Activated CD4-positive, alpha-beta T cell treated with anti-CD3 and anti-CD28 coated beads for 36 hours (primary cell): ENCODE measurements at regions of chr1 and their contacts with region 1.

Region 1: GRCh38 chr1:53889304-53890298 is at the start of gene YIPF1:
- DNase-seq: peak; percentile 93
- ATAC-seq: peak; percentile 90
- H3K4me3 Mint-ChIP-seq: peak within 1 kb of the TSS; percentile 96
- H3K27ac Mint-ChIP-seq: peak within 1 kb of the TSS; percentile 94
- H3K4me1 Mint-ChIP-seq: peaks cover 38% of the 10 kb centered on the region
- H3K27me3 Mint-ChIP-seq: no peaks in the 10 kb centered on the region
- total RNA-seq, gene YIPF1: 19.0 to 24.4 TPM

Region 2: DNA sequence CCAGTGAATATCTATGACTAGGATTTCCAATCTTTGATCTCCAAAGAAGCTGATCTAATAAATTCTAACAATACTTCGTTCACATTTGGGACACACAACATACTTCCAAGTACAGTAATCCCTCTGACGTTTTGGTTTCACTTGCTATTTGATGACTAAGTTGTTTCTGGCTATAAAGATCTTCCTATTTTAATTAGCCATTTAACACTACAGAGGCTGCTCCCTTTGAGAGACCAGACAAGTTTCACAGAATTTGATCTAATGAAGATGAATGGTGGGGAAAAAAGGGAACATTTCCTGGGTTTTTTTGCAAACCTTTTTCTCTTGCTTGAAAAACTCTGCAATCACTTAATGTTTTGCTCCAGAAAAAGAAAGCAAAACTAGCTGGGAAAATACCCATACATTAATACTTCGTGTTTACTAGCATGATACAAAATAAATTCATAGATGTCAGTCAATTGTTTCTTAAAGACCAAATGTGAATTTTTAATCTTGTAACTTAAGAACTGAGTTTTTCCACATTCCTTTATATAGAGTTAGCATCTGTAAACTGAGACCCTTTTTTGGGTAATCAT is 122.7 kb before region 1 on chr1:
- CTCF ChIA-PET with region 1: no interaction called
- POLR2A ChIA-PET with region 1: no interaction called
- intact Hi-C with region 1: no loop called
- DNase-seq: no peak
- ATAC-seq: no peak
- H3K4me3 Mint-ChIP-seq: no peak overlapping the region
- H3K27ac Mint-ChIP-seq: peak overlapping the region; percentile 8
- H3K4me1 Mint-ChIP-seq: peaks cover 18% of the 10 kb centered on the region
- H3K27me3 Mint-ChIP-seq: no peaks in the 10 kb centered on the region

Region 3: DNA sequence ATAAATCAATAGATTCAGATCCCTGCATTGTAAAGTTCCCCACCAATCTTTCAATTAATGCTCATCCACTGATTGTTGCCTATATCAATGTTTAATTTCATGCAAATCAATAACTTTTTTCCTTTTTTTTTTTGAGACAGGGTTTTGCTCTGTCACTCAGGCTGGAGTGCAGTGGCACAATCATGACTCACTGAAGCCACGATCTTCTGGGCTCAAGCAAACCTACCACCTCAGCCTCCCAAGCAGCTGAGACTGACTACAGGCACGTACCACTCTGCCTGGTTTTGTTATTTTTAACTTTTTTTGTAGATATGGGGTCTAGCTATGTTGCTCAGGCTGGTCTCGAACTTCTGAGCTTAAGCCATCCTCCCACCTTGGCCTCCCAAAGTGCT is 30.1 kb after region 1 on chr1:
- CTCF ChIA-PET with region 1: no interaction called
- POLR2A ChIA-PET with region 1: interaction called, 6 read pairs
- intact Hi-C with region 1: loop called in 1 of 2 experiments (anchors 1 kb)
- DNase-seq: peak; percentile 59
- ATAC-seq: peak; percentile 90
- H3K4me3 Mint-ChIP-seq: no peak overlapping the region
- H3K27ac Mint-ChIP-seq: peak overlapping the region; percentile 85
- H3K4me1 Mint-ChIP-seq: peaks cover 28% of the 10 kb centered on the region
- H3K27me3 Mint-ChIP-seq: no peaks in the 10 kb centered on the region

Region 4: GRCh38 chr1:54791880-54792522 is 902.4 kb after region 1 on chr1:
- CTCF ChIA-PET with region 1: no interaction called
- POLR2A ChIA-PET with region 1: no interaction called
- intact Hi-C with region 1: loop called in 1 of 2 experiments (anchors 10 kb)
- DNase-seq: peak; percentile 84
- ATAC-seq: peak; percentile 45
- H3K4me3 Mint-ChIP-seq: no peak overlapping the region
- H3K27ac Mint-ChIP-seq: peak overlapping the region; percentile 22
- H3K4me1 Mint-ChIP-seq: peaks cover 19% of the 10 kb centered on the region
- H3K27me3 Mint-ChIP-seq: no peaks in the 10 kb centered on the region

Region 5: DNA sequence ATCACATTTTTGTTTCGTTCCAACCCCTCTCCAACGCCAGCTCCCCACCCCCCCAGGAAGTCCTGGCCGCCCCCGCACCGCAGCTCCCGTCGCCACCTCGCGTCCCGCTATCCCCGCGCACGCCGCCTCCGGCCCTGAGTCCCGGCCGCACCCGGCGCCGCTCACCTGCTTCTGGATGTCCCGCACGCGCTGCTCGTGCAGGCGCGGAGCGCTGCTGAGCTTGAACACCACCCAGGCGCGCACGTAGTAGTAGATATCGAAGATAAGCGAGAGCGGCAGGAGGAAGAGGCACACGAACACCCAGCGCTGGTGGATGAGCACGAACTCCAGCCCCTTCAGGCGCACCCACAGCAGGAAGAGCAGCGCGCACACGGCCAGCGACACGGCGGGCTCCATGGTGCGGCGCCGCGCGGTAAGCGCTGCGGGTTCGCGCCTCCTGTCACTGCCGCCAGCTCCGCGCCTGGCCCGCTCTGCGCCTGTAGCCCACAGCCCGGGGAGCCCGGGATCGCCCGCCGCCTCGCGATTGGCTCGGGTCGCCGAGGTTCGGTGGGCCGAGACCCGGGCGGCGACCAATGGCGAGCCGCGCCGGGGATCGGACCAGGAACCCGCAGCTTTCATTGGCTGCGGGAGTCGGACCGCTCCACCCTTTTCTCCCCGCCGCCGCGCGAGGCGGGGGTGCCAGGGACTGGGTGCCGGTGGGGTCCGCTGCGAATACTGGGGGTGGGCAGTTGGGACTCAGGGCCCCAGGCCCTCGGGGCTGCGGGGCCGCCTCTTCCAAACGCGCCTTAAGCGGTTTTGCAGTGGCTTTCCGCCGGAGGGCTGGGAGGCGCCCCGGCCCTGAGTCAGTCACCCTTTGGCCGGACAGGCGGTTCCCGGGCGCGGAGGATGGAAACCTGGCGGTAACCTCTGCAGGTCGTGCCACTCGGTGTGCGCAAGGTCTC is 997.4 kb after region 1 on chr1 and contains the start of gene DHCR24:
- CTCF ChIA-PET with region 1: no interaction called
- POLR2A ChIA-PET with region 1: no interaction called
- intact Hi-C with region 1: loop called in 1 of 2 experiments (anchors 2 kb)
- DNase-seq: peak; percentile 88
- ATAC-seq: peak; percentile 96
- H3K4me3 Mint-ChIP-seq: peak within 1 kb of the TSS; percentile 89
- H3K27ac Mint-ChIP-seq: peak within 1 kb of the TSS; percentile 84
- H3K4me1 Mint-ChIP-seq: peaks cover 39% of the 10 kb centered on the region
- H3K27me3 Mint-ChIP-seq: peaks cover 8% of the 10 kb centered on the region
- total RNA-seq, gene DHCR24: 78.4 to 80.6 TPM